ENCODE measurements at regions of chr1 and their contacts with region 1.

Region 1: DNA sequence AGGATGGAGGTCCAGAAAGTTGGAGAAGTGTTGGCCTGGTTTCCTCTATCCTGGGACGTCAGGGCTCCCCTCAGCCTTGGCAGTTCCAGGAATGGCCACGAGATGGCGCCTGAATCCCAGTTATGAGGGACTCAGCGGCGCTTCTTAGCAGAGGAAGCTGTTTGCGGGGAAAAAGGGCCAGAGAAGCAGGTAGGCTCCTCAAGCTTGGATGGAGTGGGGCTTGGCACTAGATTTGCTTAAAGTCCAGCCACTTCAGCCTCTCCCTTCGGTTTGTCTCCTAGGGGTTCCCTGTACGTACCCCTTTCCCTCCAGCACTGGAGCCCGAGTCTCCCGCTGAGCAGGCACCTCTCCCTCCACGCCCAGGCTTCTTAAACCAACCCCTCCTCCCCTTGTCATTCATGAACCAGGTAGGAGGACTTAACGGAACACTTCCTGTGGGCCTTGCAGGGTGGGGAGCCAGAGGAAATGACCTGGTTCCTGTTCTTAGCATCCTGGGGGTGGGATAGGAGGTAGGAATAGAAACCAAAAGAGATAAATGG is 32.0 kb upstream of the TENT5B start:
- DNase-seq: peak; percentile 94
- ATAC-seq: peak; percentile 89
- H3K4me3 Mint-ChIP-seq: peak overlapping the region; percentile 65
- H3K27ac Mint-ChIP-seq: peak overlapping the region; percentile 60
- H3K4me1 Mint-ChIP-seq: peaks cover 20% of the 10 kb centered on the region
- H3K27me3 Mint-ChIP-seq: no peaks in the 10 kb centered on the region

Region 2: DNA sequence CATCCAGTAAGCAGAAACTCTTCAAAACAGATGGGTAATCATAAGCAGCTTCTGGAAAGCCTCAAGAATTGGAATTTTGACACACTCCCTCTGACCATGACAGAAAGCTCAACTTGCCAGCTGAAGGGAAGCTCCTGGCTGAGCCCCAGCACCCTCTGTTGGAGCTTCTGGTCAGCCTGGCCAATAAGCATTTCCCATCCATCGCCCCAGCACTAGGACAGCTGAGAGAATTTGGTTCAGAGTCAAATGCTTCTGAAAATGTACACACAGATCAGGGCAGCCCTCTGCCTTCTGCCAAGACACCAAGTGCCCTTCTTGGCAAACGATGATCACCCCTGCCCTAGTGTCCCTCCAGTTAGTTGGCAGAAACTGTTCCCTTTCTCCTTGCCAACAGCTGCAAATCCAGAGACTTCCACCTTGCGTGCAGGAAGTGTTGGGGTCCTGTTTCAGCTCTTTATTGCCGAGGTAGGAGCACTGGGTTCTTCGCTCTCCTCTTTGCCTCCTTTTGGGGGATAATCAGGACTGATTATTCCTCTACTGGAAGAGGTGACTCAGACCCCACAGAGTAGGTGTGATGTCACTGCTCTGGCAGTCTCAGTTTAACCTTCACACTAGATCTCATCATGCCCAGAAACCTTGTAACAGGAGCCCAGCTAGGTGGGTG is 245.1 kb before region 1 on chr1:
- CTCF ChIA-PET with region 1: no interaction called
- POLR2A ChIA-PET with region 1: no interaction called
- intact Hi-C with region 1: no loop called
- DNase-seq: peak; percentile 48
- ATAC-seq: peak; percentile 78
- H3K4me3 Mint-ChIP-seq: no peak overlapping the region
- H3K27ac Mint-ChIP-seq: peak overlapping the region; percentile 90
- H3K4me1 Mint-ChIP-seq: peaks cover 37% of the 10 kb centered on the region
- H3K27me3 Mint-ChIP-seq: no peaks in the 10 kb centered on the region

Region 3: GRCh38 chr1:26993237-26994019 is 51.3 kb before region 1 on chr1 and contains the start of gene TRNP1:
- CTCF ChIA-PET with region 1: interaction called, 8 read pairs
- POLR2A ChIA-PET with region 1: no interaction called
- intact Hi-C with region 1: loop called in 1 of 2 experiments (anchors 2 kb)
- DNase-seq: peak; percentile 83
- ATAC-seq: peak; percentile 67
- H3K4me3 Mint-ChIP-seq: peak within 1 kb of the TSS; percentile 72
- H3K27ac Mint-ChIP-seq: peak within 1 kb of the TSS; percentile 63
- H3K4me1 Mint-ChIP-seq: peaks cover 19% of the 10 kb centered on the region
- H3K27me3 Mint-ChIP-seq: peaks cover 49% of the 10 kb centered on the region
- total RNA-seq, gene TRNP1: 0.62 to 0.69 TPM

Region 4: DNA sequence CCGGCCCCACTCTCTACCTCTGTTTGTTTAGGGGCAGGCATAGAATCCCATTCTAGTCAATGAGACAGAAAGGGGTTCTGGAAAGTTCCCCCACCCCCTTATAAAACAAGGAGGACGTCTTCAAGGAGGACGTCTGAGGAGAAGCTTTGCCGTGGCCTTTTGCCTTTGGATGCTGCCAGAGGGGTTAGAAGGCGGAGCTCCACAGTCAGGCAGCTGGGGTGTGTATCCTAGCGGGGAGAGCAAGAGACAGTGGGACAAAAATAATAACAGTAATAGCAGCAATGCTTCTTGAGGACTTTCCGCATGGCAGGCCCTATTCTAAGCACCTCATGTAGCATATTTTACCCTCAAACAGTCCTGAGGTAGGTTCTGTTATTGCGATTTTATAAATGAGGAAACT is 16.2 kb after region 1 on chr1:
- CTCF ChIA-PET with region 1: interaction called, 13 read pairs
- POLR2A ChIA-PET with region 1: no interaction called
- intact Hi-C with region 1: no loop called
- DNase-seq: no peak
- ATAC-seq: no peak
- H3K4me3 Mint-ChIP-seq: no peak overlapping the region
- H3K27ac Mint-ChIP-seq: no peak overlapping the region
- H3K4me1 Mint-ChIP-seq: no peaks in the 10 kb centered on the region
- H3K27me3 Mint-ChIP-seq: no peaks in the 10 kb centered on the region

Region 5: GRCh38 chr1:27097484-27097917 is 52.8 kb after region 1 on chr1:
- CTCF ChIA-PET with region 1: interaction called, 209 read pairs
- POLR2A ChIA-PET with region 1: interaction called, 4 read pairs
- intact Hi-C with region 1: loop called (anchors 1 kb)
- DNase-seq: peak; percentile 87
- ATAC-seq: peak; percentile 84
- H3K4me3 Mint-ChIP-seq: no peak overlapping the region
- H3K27ac Mint-ChIP-seq: no peak overlapping the region
- H3K4me1 Mint-ChIP-seq: peaks cover 9% of the 10 kb centered on the region
- H3K27me3 Mint-ChIP-seq: no peaks in the 10 kb centered on the region

Region 6: GRCh38 chr1:27111626-27112573 is 67.2 kb after region 1 on chr1:
- CTCF ChIA-PET with region 1: interaction called, 27 read pairs
- POLR2A ChIA-PET with region 1: no interaction called
- intact Hi-C with region 1: no loop called
- DNase-seq: peak; percentile 88
- ATAC-seq: peak; percentile 99
- H3K4me3 Mint-ChIP-seq: no peak overlapping the region
- H3K27ac Mint-ChIP-seq: peak overlapping the region; percentile 82
- H3K4me1 Mint-ChIP-seq: peaks cover 45% of the 10 kb centered on the region
- H3K27me3 Mint-ChIP-seq: no peaks in the 10 kb centered on the region

Region 7: GRCh38 chr1:27141151-27142003 is 96.7 kb after region 1 on chr1:
- CTCF ChIA-PET with region 1: no interaction called
- POLR2A ChIA-PET with region 1: no interaction called
- intact Hi-C with region 1: no loop called
- DNase-seq: no peak
- ATAC-seq: no peak
- H3K4me3 Mint-ChIP-seq: no peak overlapping the region
- H3K27ac Mint-ChIP-seq: peak overlapping the region; percentile 24
- H3K4me1 Mint-ChIP-seq: peaks cover 71% of the 10 kb centered on the region
- H3K27me3 Mint-ChIP-seq: no peaks in the 10 kb centered on the region

Region 8: GRCh38 chr1:27203946-27204345 is 159.3 kb after region 1 on chr1:
- CTCF ChIA-PET with region 1: interaction called, 6 read pairs
- POLR2A ChIA-PET with region 1: no interaction called
- intact Hi-C with region 1: loop called (anchors 2 to 10 kb)
- DNase-seq: no peak
- ATAC-seq: no peak
- H3K4me3 Mint-ChIP-seq: no peak overlapping the region
- H3K27ac Mint-ChIP-seq: no peak overlapping the region
- H3K4me1 Mint-ChIP-seq: no peaks in the 10 kb centered on the region
- H3K27me3 Mint-ChIP-seq: no peaks in the 10 kb centered on the region

Region 9: DNA sequence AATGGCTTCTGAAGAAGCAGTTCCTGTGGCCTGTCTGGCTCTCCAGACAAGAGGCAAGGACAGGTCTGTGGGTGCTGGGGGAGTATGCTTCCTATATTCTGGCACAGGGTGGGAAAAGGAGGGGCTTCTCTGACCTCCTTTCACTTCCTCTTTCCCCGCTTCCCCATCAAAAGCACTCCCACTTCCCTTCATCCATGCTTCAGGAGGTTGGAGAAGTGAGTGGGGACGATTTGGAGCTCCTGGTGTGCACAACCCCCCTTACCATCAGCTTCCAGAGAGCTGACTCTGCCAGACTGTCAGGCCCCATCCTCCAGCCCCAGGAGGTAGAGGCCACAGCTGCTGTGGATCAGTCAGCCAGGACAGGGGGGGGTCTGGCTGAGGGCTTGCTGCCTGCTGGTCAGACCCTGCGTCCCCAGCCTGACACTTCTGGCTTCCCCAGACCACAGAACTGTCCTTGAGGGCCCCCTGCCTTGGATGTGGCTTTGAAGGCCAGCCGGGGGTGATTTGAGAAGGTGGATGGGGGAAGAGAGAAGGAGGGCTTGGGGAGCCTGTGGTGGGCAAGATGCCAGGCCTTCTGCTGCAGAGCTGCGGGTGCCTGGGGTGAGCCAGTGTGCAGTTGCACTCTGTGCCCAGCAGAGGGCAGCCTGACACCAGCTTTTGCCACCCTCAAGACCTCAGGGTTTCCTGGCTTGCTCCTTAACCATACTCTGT is 255.8 kb after region 1 on chr1:
- CTCF ChIA-PET with region 1: interaction called, 35 read pairs
- POLR2A ChIA-PET with region 1: no interaction called
- intact Hi-C with region 1: no loop called
- DNase-seq: peak; percentile 86
- ATAC-seq: peak; percentile 92
- H3K4me3 Mint-ChIP-seq: no peak overlapping the region
- H3K27ac Mint-ChIP-seq: no peak overlapping the region
- H3K4me1 Mint-ChIP-seq: no peaks in the 10 kb centered on the region
- H3K27me3 Mint-ChIP-seq: no peaks in the 10 kb centered on the region

Measured in activated CD4-positive, alpha-beta T cell treated with anti-CD3 and anti-CD28 coated beads for 36 hours (primary cell).